Activated CD4-positive, alpha-beta T cell treated with anti-CD3 and anti-CD28 coated beads for 36 hours (primary cell): ENCODE measurements at regions of chr2 and their contacts with region 1.

Region 1: GRCh38 chr2:66212770-66213169 is 222.2 kb upstream of the MEIS1 start:
- DNase-seq: no peak
- ATAC-seq: no peak
- H3K4me3 Mint-ChIP-seq: no peak overlapping the region
- H3K27ac Mint-ChIP-seq: no peak overlapping the region
- H3K4me1 Mint-ChIP-seq: no peaks in the 10 kb centered on the region
- H3K27me3 Mint-ChIP-seq: no peaks in the 10 kb centered on the region

Region 2: GRCh38 chr2:65800998-65801397 is 411.8 kb before region 1 on chr2:
- CTCF ChIA-PET with region 1: no interaction called
- POLR2A ChIA-PET with region 1: no interaction called
- intact Hi-C with region 1: no loop called
- DNase-seq: no peak
- ATAC-seq: no peak
- H3K4me3 Mint-ChIP-seq: no peak overlapping the region
- H3K27ac Mint-ChIP-seq: no peak overlapping the region
- H3K4me1 Mint-ChIP-seq: no peaks in the 10 kb centered on the region
- H3K27me3 Mint-ChIP-seq: no peaks in the 10 kb centered on the region

Region 3: DNA sequence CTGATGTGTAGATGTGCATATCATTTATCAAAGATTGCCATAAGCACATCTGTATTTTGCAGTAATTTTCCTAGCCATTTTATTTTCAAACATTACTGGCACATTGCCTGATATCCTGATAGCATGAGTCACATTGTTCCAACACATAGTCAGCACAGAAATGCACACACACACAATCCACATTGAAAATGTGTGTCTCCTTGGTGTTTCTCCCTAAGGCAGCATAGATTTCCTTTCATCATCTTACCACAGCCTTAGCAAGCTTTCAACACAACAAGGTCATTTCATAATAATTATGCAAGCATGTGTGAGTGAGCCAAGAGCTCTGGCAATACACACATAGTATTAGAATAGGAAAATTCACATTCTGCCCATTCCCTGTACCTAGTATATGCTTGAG is 23.2 kb before region 1 on chr2:
- CTCF ChIA-PET with region 1: no interaction called
- POLR2A ChIA-PET with region 1: no interaction called
- intact Hi-C with region 1: loop called in 1 of 2 experiments (anchors 1 kb)
- DNase-seq: no peak
- ATAC-seq: no peak
- H3K4me3 Mint-ChIP-seq: no peak overlapping the region
- H3K27ac Mint-ChIP-seq: no peak overlapping the region
- H3K4me1 Mint-ChIP-seq: no peaks in the 10 kb centered on the region
- H3K27me3 Mint-ChIP-seq: no peaks in the 10 kb centered on the region

Region 4: DNA sequence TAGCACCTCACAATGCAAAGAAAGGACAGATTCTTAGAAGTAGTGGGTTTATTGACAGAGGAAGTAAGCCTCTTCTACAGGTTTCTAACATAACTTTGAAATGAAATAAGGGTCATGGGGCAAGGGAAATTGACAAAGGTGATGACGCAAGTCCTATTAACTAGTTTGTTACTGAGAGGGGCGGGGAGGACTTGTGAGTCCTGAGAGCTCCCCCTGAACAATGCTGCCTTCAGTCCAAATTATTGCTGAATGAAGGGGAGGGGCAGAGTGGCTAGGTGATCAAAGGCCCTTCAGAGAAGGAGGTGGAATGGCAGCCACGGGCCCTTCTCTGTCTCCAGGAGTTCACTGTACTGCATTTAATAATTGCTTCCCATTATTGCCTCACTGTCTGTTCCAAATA is 612.2 kb after region 1 on chr2:
- CTCF ChIA-PET with region 1: no interaction called
- POLR2A ChIA-PET with region 1: no interaction called
- intact Hi-C with region 1: no loop called
- DNase-seq: no peak
- ATAC-seq: no peak
- H3K4me3 Mint-ChIP-seq: no peak overlapping the region
- H3K27ac Mint-ChIP-seq: no peak overlapping the region
- H3K4me1 Mint-ChIP-seq: no peaks in the 10 kb centered on the region
- H3K27me3 Mint-ChIP-seq: no peaks in the 10 kb centered on the region